ENCODE measurements at regions of chr3 and their contacts with region 1.

Region 1: GRCh38 chr3:152382312-152383135 is 113.8 kb downstream of the MBNL1 start:
- DNase-seq: no peak
- H3K4me3 Mint-ChIP-seq: peak overlapping the region; percentile 76
- H3K27ac Mint-ChIP-seq: peak overlapping the region; percentile 91
- H3K4me1 Mint-ChIP-seq: peaks cover 67% of the 10 kb centered on the region
- H3K27me3 Mint-ChIP-seq: no peaks in the 10 kb centered on the region

Region 2: GRCh38 chr3:152365766-152366593 is 16.5 kb before region 1 on chr3:
- intact Hi-C with region 1: loop called (anchors 2 kb)
- DNase-seq: no peak
- H3K4me3 Mint-ChIP-seq: no peak overlapping the region
- H3K27ac Mint-ChIP-seq: no peak overlapping the region
- H3K4me1 Mint-ChIP-seq: peaks cover 65% of the 10 kb centered on the region
- H3K27me3 Mint-ChIP-seq: no peaks in the 10 kb centered on the region

Region 3: GRCh38 chr3:152396867-152397266 is 14.3 kb after region 1 on chr3:
- intact Hi-C with region 1: loop called (anchors 2 kb)
- DNase-seq: no peak
- H3K4me3 Mint-ChIP-seq: no peak overlapping the region
- H3K27ac Mint-ChIP-seq: no peak overlapping the region
- H3K4me1 Mint-ChIP-seq: peaks cover 53% of the 10 kb centered on the region
- H3K27me3 Mint-ChIP-seq: no peaks in the 10 kb centered on the region

Measured in activated T-helper 1 cell treated with anti-CD3 and anti-CD28 coated beads, Interleukin-12 subunit alpha, Interleukin-12 subunit beta, Interleukin-2, Interleukin-4 antibody, amounts not matched to agents 30 ng/mL and 10 ng/mL and 1 ng/mL, durations not matched to agents 14 hours and 24 hours and 36 hours (primary cell).